ENCODE measurements at regions of chr1 and their contacts with region 1.

Region 1: GRCh38 chr1:53945433-53946251 is at the start of gene IFT25:
- DNase-seq: peak; percentile 95 to 97 (median 96)
- H3K4me3 ChIP-seq: peak within 1 kb of the TSS; percentile 78 to 94 (median 82)
- H3K27ac ChIP-seq: peak within 1 kb of the TSS; percentile 75 to 91
- H3K4me1 ChIP-seq: peaks cover 1 to 27% (median 20%) of the 10 kb centered on the region in 4 experiments
- H3K27me3 ChIP-seq: no peaks in the 10 kb centered on the region

Region 2: GRCh38 chr1:53869454-53870117 is 76.1 kb before region 1 on chr1:
- CTCF ChIA-PET with region 1: interaction called, 84 read pairs
- POLR2A ChIA-PET with region 1: no interaction called
- DNase-seq: peak; percentile 48 to 86 (median 82)
- H3K4me3 ChIP-seq: no peak overlapping the region
- H3K27ac ChIP-seq: no peak overlapping the region
- H3K4me1 ChIP-seq: peaks cover 0 to 6% (median 4%) of the 10 kb centered on the region in 4 experiments
- H3K27me3 ChIP-seq: no peaks in the 10 kb centered on the region

Region 3: GRCh38 chr1:53889304-53890298 is 56.0 kb before region 1 on chr1 and contains the start of gene YIPF1:
- CTCF ChIA-PET with region 1: interaction called, 10 read pairs
- POLR2A ChIA-PET with region 1: interaction called, 3 read pairs
- DNase-seq: peak; percentile 82 to 84 (median 84)
- H3K4me3 ChIP-seq: peak within 1 kb of the TSS; percentile 63 to 98 (median 93)
- H3K27ac ChIP-seq: peak within 1 kb of the TSS; percentile 36 to 76
- H3K4me1 ChIP-seq: peaks cover 2 to 25% (median 21%) of the 10 kb centered on the region in 4 experiments
- H3K27me3 ChIP-seq: no peaks in the 10 kb centered on the region

Region 4: GRCh38 chr1:53934170-53934765 is 11.4 kb before region 1 on chr1:
- CTCF ChIA-PET with region 1: interaction called, 13 read pairs
- POLR2A ChIA-PET with region 1: no interaction called
- DNase-seq: peak in 2 of 3 donors; percentile 46 to 61
- H3K4me3 ChIP-seq: no peak overlapping the region
- H3K27ac ChIP-seq: no peak overlapping the region
- H3K4me1 ChIP-seq: peaks cover 0 to 2% (median 0%) of the 10 kb centered on the region in 4 experiments
- H3K27me3 ChIP-seq: no peaks in the 10 kb centered on the region

Region 5: GRCh38 chr1:53992085-53992874 is 46.6 kb after region 1 on chr1:
- CTCF ChIA-PET with region 1: no interaction called
- POLR2A ChIA-PET with region 1: no interaction called
- DNase-seq: no peak
- H3K4me3 ChIP-seq: no peak overlapping the region
- H3K27ac ChIP-seq: no peak overlapping the region
- H3K4me1 ChIP-seq: no peaks in the 10 kb centered on the region
- H3K27me3 ChIP-seq: no peaks in the 10 kb centered on the region